IMR-90 (cell line): ENCODE measurements at regions of chr13 and their contacts with region 1.

Region 1: DNA sequence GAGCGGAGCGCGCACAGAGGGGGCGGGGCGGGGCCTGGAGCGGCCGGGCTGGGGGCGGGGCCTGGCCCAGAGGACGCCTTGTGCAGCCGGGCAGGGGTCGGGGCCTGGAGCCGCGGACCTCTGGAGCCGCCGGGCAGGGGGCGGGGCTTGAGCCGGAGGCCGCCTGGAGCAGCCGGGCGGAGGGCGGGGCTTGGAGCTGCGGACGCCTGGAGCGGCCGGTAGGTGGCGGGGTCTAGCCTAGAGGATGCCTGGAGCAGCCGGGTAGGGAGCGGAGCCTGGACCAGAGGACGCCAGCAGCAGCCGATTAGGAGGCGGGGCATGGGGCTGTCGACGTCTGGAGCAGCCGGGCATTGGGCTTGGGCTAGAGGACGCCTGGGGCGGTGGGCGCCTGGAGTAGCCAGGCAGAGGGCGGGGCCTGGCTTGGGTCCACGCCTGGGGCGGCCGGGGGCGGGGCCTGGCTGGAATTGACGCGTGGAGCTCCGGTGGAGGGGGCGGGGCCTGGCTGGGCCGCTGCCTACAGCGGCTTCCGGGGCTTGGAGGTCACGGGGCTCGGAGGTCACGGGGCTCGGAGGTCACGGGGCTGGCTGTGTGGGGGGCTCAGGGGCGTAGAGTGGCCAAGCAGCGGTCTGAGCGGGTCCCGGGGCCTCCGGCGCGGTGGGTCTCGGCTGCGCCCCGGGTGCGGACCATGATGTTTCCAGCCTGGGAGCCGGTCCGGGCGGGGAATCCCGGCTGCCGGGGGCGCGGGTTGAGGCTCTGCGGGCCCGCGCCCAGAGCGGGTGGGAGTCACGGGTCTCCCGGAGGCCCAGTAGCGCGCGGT is at the start of gene ANKRD10:
- DNase-seq: peak; percentile 99
- ATAC-seq: peak; percentile 86
- H3K4me3 ChIP-seq: peak within 1 kb of the TSS; percentile 98
- H3K27ac ChIP-seq: peak within 1 kb of the TSS; percentile 100
- H3K4me1 ChIP-seq: peaks cover 8% of the 10 kb centered on the region
- H3K27me3 ChIP-seq: no peaks in the 10 kb centered on the region
- CTCF ChIP-seq: peak; percentile 94
- POLR2A ChIP-seq: peak; percentile 19
- RAD21 ChIP-seq: peak; percentile 80
- total RNA-seq, gene ANKRD10: 18.3 and 24.2 TPM in 2 replicates

Region 2: DNA sequence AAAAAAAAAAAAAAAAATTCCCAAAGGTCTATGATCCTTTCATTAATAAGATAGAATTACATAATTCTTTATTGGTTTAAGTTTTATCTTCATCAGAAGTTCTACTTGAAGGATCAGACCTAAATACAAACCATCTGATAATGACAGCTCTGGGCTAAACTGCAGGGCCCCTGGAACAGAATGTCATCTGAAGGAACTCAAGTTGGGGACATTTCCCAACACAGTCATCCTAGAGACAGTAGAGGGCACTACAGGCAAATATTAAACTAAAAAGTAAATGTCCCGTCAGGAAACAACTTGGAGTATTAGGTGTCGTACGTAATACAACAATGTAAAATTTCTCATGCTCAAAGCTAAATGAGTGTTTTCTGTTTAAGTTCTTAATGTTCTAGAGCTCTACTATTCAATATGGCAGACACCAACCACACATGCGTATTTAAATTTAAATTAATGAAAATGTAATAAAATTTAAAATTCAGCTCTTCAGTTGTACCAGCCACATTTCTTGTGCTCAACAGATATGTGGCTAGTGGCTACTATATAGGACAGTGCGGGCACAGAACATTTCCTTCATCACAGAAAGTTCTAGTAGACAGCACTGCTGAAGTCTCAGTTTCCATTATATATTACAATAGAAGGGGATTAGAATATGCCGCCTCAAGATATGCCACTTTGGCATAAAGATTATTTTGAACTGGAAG is 321.7 kb before region 1 on chr13:
- CTCF ChIA-PET with region 1: no interaction called
- POLR2A ChIA-PET with region 1: no interaction called
- dilution Hi-C with region 1: no loop called
- in situ Hi-C with region 1: no loop called
- intact Hi-C with region 1: loop called (anchors 5 kb)
- DNase-seq: peak; percentile 57
- ATAC-seq: peak; percentile 81
- H3K4me3 ChIP-seq: no peak overlapping the region
- H3K27ac ChIP-seq: no peak overlapping the region
- H3K4me1 ChIP-seq: 0 out of 2 replicates have a peak, but pooled peaks cover 4% of the 10 kb centered on the region
- H3K27me3 ChIP-seq: peaks cover 2% of the 10 kb centered on the region; the same call in 1 of the 2 replicates
- CTCF ChIP-seq: peak; percentile 61
- POLR2A ChIP-seq: no peak
- RAD21 ChIP-seq: peak; percentile 66

Region 3: DNA sequence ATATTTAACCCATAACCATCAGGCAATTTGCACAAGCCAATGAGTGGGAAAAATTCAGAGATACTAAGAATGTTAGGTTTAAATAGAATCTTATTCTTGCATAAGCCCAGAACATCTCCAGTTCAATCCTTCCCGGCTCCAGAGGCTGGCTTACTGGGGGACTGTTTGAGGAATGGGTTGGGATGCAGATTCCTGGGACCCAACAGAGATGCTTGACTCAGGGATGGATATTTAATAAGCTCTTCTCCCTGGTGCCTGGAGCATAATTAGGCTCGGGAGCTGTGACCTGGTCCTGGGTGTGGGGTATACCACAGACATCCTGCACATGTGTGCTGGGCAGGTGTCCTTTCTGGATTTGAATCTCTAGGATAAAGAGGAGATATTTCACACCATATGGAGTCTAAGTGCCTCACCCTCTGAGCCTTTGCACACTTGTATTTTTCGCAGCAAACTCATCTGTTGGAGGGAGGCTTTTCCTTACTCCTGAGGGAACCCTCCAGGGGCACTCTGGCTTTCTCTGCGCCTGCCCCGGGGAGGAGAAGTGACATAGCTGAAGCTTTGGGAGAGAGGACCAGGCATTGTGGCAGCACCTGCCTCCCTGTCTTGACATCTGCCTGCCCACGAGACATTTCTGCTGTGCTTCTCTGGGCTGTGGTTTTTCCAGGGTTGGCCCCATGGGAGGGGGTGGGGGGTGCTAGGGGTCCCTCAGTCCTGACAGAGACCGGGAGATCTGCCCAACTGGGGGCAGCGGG is 35.7 kb after region 1 on chr13:
- CTCF ChIA-PET with region 1: no interaction called
- POLR2A ChIA-PET with region 1: no interaction called
- dilution Hi-C with region 1: no loop called
- in situ Hi-C with region 1: loop called (anchors 5 kb)
- intact Hi-C with region 1: loop called (anchors 2 kb)
- DNase-seq: no peak
- ATAC-seq: no peak
- H3K4me3 ChIP-seq: no peak overlapping the region
- H3K27ac ChIP-seq: no peak overlapping the region
- H3K4me1 ChIP-seq: peaks cover 14% of the 10 kb centered on the region
- H3K27me3 ChIP-seq: no peaks in the 10 kb centered on the region
- CTCF ChIP-seq: no peak
- POLR2A ChIP-seq: no peak
- RAD21 ChIP-seq: no peak

Region 4: DNA sequence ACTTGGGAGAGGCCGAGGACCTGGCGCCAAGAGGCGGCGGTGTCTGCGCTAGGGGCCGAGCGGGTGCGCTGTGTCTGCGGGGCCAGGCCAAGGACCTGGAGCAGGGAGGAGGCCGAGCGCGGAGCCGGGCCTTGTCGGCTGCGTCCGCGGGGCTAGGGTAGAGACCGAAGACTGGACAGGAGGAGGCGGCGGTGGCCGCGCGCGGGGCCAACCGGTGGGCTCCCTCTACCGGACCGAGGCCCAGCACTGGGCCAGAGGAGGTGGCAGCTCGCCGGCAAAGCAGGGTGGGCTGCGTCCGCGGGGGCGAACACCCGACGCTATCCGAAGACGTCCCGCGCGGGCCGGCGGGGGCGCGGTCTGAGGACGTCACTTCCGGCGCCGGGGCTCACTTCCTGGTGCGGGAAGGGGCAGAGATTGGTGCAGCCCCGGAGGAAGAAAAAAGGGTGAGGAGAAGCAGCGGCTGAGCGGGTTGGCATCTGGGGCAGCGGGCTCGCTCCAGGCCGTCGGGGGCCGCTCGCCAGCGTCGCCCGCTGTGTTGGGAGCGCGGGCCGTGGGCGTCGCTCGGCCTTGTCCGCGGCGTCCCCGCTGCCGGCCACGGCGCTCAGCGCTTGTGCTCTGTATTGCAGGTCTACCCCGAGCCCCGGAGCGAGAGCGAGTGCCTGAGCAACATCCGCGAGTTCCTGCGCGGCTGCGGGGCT is 238.2 kb after region 1 on chr13:
- CTCF ChIA-PET with region 1: no interaction called
- POLR2A ChIA-PET with region 1: no interaction called
- dilution Hi-C with region 1: no loop called
- in situ Hi-C with region 1: no loop called
- intact Hi-C with region 1: loop called (anchors 5 kb)
- DNase-seq: peak; percentile 89
- ATAC-seq: peak; percentile 91
- H3K4me3 ChIP-seq: peak overlapping the region; percentile 80
- H3K27ac ChIP-seq: peak overlapping the region; percentile 90
- H3K4me1 ChIP-seq: peaks cover 7% of the 10 kb centered on the region
- H3K27me3 ChIP-seq: peaks cover 7% of the 10 kb centered on the region; the same call in 1 of the 2 replicates
- CTCF ChIP-seq: peak; percentile 49
- POLR2A ChIP-seq: peak; percentile 85; the same call in 1 of the 2 replicates
- RAD21 ChIP-seq: peak; percentile 33

Region 5: DNA sequence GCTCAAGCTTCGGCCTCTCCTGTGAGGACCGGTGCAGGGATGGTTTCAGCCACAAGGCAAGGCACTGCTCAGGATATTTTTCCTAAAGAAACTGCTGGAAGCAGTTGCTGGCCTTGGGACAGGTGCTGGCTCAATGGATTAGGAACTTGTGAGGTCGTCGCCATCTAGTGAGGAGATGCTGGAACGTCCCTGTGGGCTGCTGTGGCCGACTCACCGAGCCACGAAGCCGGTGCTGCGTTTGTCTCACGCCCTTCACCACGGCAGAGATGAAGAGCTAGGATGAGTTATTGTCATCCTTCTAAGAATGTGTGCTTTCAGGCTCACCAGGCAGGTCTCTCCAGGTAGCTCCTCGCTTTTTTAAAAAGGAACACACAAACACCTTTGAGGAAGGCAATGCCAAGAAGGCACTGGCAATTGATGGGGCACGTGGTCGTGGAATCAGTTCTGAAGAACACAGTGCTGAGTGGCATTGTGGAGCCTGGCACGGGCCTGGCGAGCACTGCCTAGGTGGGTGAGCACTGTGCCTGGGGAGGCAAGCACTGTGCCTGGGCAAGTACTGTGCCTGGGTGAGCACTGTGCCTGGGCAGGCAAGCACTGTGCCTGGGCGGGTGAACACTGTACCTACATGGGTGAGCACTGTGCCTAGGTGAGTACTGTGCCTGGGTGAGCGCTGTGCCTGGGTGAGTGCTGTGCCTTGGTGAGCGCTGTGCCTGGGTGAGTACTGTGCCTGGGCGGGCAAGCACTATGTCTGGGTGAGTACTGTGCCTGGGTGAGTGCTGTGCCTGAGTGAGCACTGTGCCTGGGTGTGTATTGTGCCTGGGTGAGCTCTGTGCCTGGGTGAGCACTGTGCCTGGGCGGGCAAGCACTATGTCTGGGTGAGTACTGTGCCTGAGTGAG is 545.5 kb after region 1 on chr13:
- CTCF ChIA-PET with region 1: interaction called, 6 read pairs
- POLR2A ChIA-PET with region 1: no interaction called
- dilution Hi-C with region 1: no loop called
- in situ Hi-C with region 1: no loop called
- intact Hi-C with region 1: loop called (anchors 2 kb)
- DNase-seq: peak; percentile 47
- ATAC-seq: peak; percentile 89
- H3K4me3 ChIP-seq: no peak overlapping the region
- H3K27ac ChIP-seq: no peak overlapping the region
- H3K4me1 ChIP-seq: no peaks in the 10 kb centered on the region
- H3K27me3 ChIP-seq: peaks cover 2% of the 10 kb centered on the region; the same call in 1 of the 2 replicates
- CTCF ChIP-seq: peak; percentile 45
- POLR2A ChIP-seq: no peak
- RAD21 ChIP-seq: peak; percentile 51

Region 6: DNA sequence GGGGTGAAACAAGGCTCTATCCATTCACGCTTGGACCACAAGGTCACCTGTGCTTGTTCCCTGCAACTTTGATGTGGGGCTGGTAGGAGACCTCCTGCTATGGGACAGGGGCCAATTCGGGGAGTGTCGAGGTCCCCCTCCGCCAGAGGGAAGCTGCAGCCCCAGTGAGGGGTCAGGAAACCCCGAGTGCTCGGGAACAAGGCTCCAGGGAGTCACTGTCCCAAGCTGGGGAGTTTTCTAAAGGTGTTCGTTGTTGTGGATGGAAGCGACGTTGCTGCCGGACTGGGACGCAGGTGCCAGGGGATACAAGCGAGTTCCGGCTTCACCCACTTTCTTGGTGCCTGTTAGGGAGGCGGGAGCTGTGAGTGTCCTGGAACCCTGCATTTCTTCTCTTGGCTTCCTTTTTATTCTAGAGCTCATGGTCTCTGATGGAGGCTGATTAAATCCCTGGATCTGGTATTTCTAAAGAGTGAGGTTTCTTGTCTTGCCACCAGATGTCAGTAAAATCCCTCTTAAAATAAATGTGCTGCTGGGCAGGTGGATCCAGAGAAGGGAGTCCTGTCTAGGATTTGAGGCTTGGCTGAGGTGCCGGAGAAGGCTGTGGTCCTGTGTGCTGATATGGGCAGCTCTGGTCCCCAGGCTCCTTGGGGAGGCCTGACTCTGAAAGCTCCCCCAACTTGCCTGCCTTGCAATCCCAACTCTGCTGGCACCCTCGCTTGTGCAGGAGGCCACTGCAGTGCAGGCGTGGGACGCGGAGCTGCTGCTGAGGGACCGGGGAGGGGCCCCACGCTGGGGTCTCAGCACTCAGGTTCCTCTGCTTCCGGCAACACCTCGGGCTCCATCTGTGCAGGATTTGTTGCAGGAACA is 559.1 kb after region 1 on chr13:
- CTCF ChIA-PET with region 1: no interaction called
- POLR2A ChIA-PET with region 1: no interaction called
- dilution Hi-C with region 1: no loop called
- in situ Hi-C with region 1: no loop called
- intact Hi-C with region 1: no loop called
- DNase-seq: peak; percentile 35
- ATAC-seq: peak; percentile 92
- H3K4me3 ChIP-seq: no peak overlapping the region
- H3K27ac ChIP-seq: no peak overlapping the region
- H3K4me1 ChIP-seq: no peaks in the 10 kb centered on the region
- H3K27me3 ChIP-seq: no peaks in the 10 kb centered on the region
- CTCF ChIP-seq: peak; percentile 57
- POLR2A ChIP-seq: no peak
- RAD21 ChIP-seq: peak; percentile 57